Activated CD4-positive, alpha-beta T cell treated with anti-CD3 and anti-CD28 coated beads for 36 hours (primary cell): ENCODE measurements at regions of chr2 and their contacts with region 1.

Region 1: DNA sequence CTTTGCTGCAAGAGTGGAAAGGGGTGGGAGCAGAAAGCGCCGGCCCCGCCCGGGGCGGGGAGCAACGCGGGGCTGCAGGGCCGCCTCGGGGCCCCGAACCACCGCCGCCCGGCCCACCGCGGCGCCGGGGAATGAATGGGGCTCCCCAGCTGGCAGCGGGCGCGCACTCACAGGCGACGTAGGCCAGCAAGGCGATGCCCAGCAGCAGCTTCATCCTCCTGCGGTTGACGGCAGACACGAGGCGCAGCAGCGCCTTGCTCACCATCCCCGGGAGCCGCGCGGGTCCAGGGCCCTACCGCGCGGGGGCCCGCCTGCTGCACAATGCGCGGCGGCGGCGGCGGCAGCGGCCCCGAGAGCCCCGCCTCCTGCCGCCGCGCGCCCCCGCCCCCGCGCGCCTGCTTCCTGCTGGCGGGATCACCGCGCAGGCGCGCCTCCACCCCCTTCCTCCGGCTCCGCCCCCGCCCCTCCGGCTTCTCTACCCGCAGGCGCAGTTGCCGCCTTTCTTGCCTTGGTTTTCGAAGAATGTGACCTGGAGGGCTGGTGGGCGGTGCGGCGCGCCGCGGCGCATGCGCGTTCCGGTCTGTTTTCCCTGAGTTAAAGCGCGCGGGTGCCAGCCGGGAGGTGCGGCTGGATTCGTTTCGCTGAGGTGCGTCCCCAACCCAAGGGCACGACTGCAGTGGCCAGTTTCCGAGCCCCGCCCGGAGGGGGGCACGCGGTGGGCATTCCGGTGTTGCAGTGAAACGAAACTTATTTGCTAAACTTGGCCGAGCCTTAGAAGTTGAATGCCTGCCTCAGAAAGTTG is at the start of gene UXS1:
- DNase-seq: peak; percentile 99
- ATAC-seq: peak; percentile 70
- H3K4me3 Mint-ChIP-seq: peak within 1 kb of the TSS; percentile 84
- H3K27ac Mint-ChIP-seq: peak within 1 kb of the TSS; percentile 91
- H3K4me1 Mint-ChIP-seq: peaks cover 43% of the 10 kb centered on the region
- H3K27me3 Mint-ChIP-seq: peaks cover 2% of the 10 kb centered on the region
- total RNA-seq, gene UXS1: 35.6 to 37.7 TPM

Region 2: GRCh38 chr2:105037572-105038382 is 1156.4 kb before region 1 on chr2 and contains the start of gene MRPS9:
- CTCF ChIA-PET with region 1: no interaction called
- POLR2A ChIA-PET with region 1: no interaction called
- intact Hi-C with region 1: loop called in 1 of 2 experiments (anchors 10 kb)
- DNase-seq: peak; percentile 99
- ATAC-seq: peak; percentile 99
- H3K4me3 Mint-ChIP-seq: peak within 1 kb of the TSS; percentile 86
- H3K27ac Mint-ChIP-seq: peak within 1 kb of the TSS; percentile 94
- H3K4me1 Mint-ChIP-seq: peaks cover 28% of the 10 kb centered on the region
- H3K27me3 Mint-ChIP-seq: no peaks in the 10 kb centered on the region
- total RNA-seq, gene MRPS9: 41.0 to 46.0 TPM

Region 3: DNA sequence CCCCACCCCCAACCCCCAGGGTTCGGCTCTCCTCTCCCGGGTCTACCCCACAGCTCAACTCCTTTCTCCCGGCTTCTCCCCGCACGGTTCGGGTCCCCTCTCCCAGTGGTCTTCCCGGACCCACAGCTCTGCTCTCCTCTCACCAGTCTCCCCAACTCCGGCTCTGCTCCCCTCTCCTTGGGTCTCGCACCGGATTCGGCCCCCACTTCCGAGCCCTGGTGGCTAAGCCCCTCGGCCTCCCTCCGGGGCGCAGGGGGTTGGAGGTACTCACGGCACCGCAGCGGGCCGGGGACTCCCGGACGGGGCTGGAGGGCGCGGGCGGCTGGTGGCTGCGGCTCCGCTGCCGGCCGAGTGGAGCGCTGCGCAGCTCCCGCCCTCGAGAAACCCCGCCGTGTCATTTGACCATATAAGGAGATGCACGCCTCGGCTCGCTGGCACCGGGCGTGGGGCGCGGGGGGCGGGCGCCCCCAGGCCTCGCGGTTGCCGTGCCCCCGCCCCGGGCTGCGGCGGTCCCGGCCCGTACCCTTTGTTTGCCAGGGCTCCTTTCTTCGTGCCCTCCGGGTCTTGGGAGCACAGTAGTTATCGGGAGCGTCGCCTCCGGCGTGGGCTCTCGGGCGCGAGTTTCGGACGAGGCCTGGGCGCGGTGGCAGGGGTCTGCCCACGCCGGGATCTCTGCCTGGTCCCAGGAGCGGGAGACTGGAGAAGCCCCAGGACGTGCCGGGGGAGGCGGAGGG is 795.3 kb before region 1 on chr2 and contains the start of gene FHL2:
- CTCF ChIA-PET with region 1: no interaction called
- POLR2A ChIA-PET with region 1: no interaction called
- intact Hi-C with region 1: loop called in 1 of 2 experiments (anchors 2 kb)
- DNase-seq: peak; percentile 86
- ATAC-seq: peak; percentile 93
- H3K4me3 Mint-ChIP-seq: peak within 1 kb of the TSS; percentile 74
- H3K27ac Mint-ChIP-seq: peak within 1 kb of the TSS; percentile 65
- H3K4me1 Mint-ChIP-seq: peaks cover 13% of the 10 kb centered on the region
- H3K27me3 Mint-ChIP-seq: peaks cover 10% of the 10 kb centered on the region
- total RNA-seq, gene FHL2: 3.9 to 4.7 TPM

Region 4: GRCh38 chr2:105749583-105750400 is 444.4 kb before region 1 on chr2:
- CTCF ChIA-PET with region 1: interaction called, 3 read pairs
- POLR2A ChIA-PET with region 1: no interaction called
- intact Hi-C with region 1: loop called in 1 of 2 experiments (anchors 2 kb)
- DNase-seq: peak; percentile 78
- ATAC-seq: peak; percentile 23
- H3K4me3 Mint-ChIP-seq: peak overlapping the region; percentile 97
- H3K27ac Mint-ChIP-seq: peak overlapping the region; percentile 99
- H3K4me1 Mint-ChIP-seq: peaks cover 71% of the 10 kb centered on the region
- H3K27me3 Mint-ChIP-seq: no peaks in the 10 kb centered on the region

Region 5: DNA sequence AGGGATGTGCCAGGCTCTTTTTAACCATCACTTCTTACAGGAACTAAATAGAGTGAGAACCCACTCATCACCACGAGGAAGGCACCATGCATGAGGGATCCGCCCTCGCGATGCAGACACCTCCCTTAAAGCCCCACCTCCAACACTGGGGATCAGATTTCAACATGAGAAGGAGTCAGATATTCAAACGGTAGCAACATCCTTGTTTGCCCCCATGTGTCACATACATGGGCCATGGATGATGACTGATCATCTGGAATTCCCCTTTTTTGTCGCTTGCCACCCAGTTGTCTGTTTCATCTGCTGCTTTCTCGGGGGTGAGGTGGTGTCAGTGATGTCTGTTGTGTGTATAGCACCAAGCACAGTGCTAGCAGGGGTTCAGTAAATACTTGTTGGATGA is 391.6 kb before region 1 on chr2:
- CTCF ChIA-PET with region 1: no interaction called
- POLR2A ChIA-PET with region 1: no interaction called
- intact Hi-C with region 1: loop called (anchors 2 to 5 kb)
- DNase-seq: peak; percentile 83
- ATAC-seq: peak; percentile 78
- H3K4me3 Mint-ChIP-seq: peak overlapping the region; percentile 31
- H3K27ac Mint-ChIP-seq: peak overlapping the region; percentile 97
- H3K4me1 Mint-ChIP-seq: peaks cover 96% of the 10 kb centered on the region
- H3K27me3 Mint-ChIP-seq: no peaks in the 10 kb centered on the region

Region 6: GRCh38 chr2:106104332-106105062 is 89.7 kb before region 1 on chr2:
- CTCF ChIA-PET with region 1: interaction called, 7 read pairs
- POLR2A ChIA-PET with region 1: no interaction called
- intact Hi-C with region 1: loop called (anchors 5 kb)
- DNase-seq: peak; percentile 77
- ATAC-seq: peak; percentile 69
- H3K4me3 Mint-ChIP-seq: no peak overlapping the region
- H3K27ac Mint-ChIP-seq: no peak overlapping the region
- H3K4me1 Mint-ChIP-seq: peaks cover 2% of the 10 kb centered on the region
- H3K27me3 Mint-ChIP-seq: no peaks in the 10 kb centered on the region

Region 7: GRCh38 chr2:106160786-106161261 is 33.4 kb before region 1 on chr2:
- CTCF ChIA-PET with region 1: interaction called, 5 read pairs
- POLR2A ChIA-PET with region 1: interaction called, 8 read pairs
- intact Hi-C with region 1: loop called (anchors 1 to 2 kb)
- DNase-seq: peak; percentile 70
- ATAC-seq: peak; percentile 71
- H3K4me3 Mint-ChIP-seq: peak overlapping the region; percentile 70
- H3K27ac Mint-ChIP-seq: peak overlapping the region; percentile 91
- H3K4me1 Mint-ChIP-seq: peaks cover 88% of the 10 kb centered on the region
- H3K27me3 Mint-ChIP-seq: no peaks in the 10 kb centered on the region

Region 8: GRCh38 chr2:106363791-106364190 is 169.6 kb after region 1 on chr2:
- CTCF ChIA-PET with region 1: no interaction called
- POLR2A ChIA-PET with region 1: no interaction called
- intact Hi-C with region 1: no loop called
- DNase-seq: peak; percentile 10
- ATAC-seq: peak; percentile 76
- H3K4me3 Mint-ChIP-seq: no peak overlapping the region
- H3K27ac Mint-ChIP-seq: no peak overlapping the region
- H3K4me1 Mint-ChIP-seq: peaks cover 3% of the 10 kb centered on the region
- H3K27me3 Mint-ChIP-seq: peaks cover 5% of the 10 kb centered on the region